ENCODE measurements at regions of chr3 and their contacts with region 1.

Region 1: DNA sequence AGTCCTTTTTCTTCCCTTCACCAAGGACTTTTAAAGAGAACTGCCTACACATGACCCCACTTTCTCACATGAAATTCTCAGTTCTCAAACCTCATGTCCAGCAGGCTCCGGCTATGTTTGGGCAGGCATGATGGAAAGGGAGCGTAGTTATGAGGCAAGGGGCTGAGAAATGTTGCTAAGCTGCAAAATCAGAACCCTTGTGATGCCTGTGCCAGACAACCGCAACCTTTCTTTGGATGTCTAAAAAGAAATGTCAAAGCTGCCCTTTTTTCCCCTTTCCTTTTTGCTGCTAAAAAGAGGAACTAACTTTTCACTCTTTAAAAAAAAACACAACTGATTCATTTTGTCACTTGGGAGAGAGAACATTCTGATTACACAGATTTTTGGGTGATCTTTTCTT is 19.2 kb downstream of the GNB4 start:
- DNase-seq: peak; percentile 44 to 90 (median 88)
- H3K4me3 ChIP-seq: peak overlapping the region in 2 of 7 experiments; percentile 16 to 49
- H3K27ac ChIP-seq: peak overlapping the region in 1 of 2 experiments; percentile 11
- H3K4me1 ChIP-seq: peaks cover 23 to 46% (median 36%) of the 10 kb centered on the region in 4 experiments
- H3K27me3 ChIP-seq: no peaks in the 10 kb centered on the region

Region 2: DNA sequence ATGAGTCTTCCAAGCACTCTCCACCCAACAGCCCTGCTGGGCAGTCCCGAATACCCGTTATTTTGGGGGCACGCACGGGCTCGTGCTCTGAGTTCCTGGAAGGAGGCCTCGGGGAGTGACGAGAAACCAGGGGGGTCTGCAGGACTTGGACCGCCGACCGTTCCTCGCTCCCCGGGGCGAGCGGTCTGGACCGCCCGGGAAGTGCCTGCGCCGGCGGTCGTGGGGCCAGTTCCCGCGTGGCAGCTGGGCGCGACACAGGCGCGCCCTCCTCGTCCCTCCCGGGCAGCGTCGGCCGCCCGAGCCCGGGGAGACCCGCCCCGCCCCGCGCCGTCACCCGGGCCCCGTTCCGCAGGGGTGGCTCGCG is 18.9 kb after region 1 on chr3:
- CTCF ChIA-PET with region 1: interaction called, 12 read pairs
- POLR2A ChIA-PET with region 1: no interaction called
- DNase-seq: peak; percentile 20 to 76 (median 66)
- H3K4me3 ChIP-seq: peak overlapping the region; percentile 82 to 93 (median 85)
- H3K27ac ChIP-seq: peak overlapping the region; percentile 77 to 90
- H3K4me1 ChIP-seq: peaks cover 11 to 39% (median 23%) of the 10 kb centered on the region in 4 experiments
- H3K27me3 ChIP-seq: no peaks in the 10 kb centered on the region

Measured in common myeloid progenitor, CD34-positive (primary cell).